ENCODE measurements at regions of chr11 and their contacts with region 1.

Region 1: GRCh38 chr11:133947321-133947756 is 9.4 kb downstream of the IGSF9B start:
- DNase-seq: peak; percentile 83
- ATAC-seq: peak; percentile 43
- H3K4me3 Mint-ChIP-seq: peak overlapping the region; percentile 81
- H3K27ac Mint-ChIP-seq: peak overlapping the region; percentile 75
- H3K4me1 Mint-ChIP-seq: peaks cover 65% of the 10 kb centered on the region
- H3K27me3 Mint-ChIP-seq: no peaks in the 10 kb centered on the region
- CTCF ChIP-seq: peak; percentile 39

Region 2: GRCh38 chr11:133762538-133762937 is 184.8 kb before region 1 on chr11:
- CTCF ChIA-PET with region 1: no interaction called
- POLR2A ChIA-PET with region 1: no interaction called
- intact Hi-C with region 1: no loop called
- DNase-seq: no peak
- ATAC-seq: no peak
- H3K4me3 Mint-ChIP-seq: no peak overlapping the region
- H3K27ac Mint-ChIP-seq: no peak overlapping the region
- H3K4me1 Mint-ChIP-seq: no peaks in the 10 kb centered on the region
- H3K27me3 Mint-ChIP-seq: peaks cover 6% of the 10 kb centered on the region
- CTCF ChIP-seq: no peak

Region 3: DNA sequence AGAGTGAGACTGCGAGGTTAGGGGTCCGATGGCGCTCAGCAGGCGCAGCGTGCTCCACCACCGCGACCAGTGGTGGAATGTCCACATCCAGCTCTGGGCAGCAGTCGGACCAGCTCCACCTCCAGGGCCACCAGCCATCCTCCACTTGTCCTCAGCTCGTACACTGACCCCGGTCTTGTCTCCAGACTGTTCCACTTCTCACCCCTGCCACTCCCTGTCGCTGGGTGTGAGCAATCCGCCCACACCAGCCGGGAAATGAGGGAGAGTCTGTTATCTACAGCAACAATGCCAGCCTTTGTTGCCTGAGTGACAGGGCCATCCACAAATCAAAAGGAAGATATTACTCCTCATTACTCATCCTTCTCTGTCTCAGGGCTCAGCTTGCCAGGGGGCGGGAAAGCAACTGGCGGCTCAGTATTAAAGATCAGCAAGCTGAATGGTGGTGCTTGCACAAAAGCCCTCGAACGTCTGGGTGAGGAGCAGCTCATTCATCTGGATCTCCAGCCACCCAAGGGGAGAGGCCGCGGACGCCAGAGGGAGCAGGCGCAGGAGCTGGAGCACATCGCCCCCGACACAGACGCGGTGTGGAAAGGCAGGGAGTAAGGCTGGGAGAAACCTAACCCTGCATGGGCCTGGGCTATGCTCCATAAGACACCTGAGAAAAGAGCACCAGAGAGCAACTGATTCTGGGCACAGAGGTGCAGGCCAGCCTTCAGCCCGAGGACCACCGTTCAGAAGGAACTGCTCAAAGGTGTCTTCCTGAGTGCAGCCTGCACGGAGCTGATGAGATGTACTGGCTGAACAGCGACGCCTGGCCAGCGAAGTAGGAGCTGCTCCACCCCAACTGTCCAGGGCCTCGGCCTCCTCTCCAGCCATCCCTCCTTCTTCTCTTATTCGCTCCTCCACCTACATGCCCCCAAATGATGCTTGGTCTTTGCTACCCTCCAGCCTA is 12.5 kb before region 1 on chr11:
- CTCF ChIA-PET with region 1: interaction called, 6 read pairs
- POLR2A ChIA-PET with region 1: interaction called, 11 read pairs
- intact Hi-C with region 1: no loop called
- DNase-seq: peak; percentile 35
- ATAC-seq: peak; percentile 64
- H3K4me3 Mint-ChIP-seq: no peak overlapping the region
- H3K27ac Mint-ChIP-seq: no peak overlapping the region
- H3K4me1 Mint-ChIP-seq: peaks cover 8% of the 10 kb centered on the region
- H3K27me3 Mint-ChIP-seq: no peaks in the 10 kb centered on the region
- CTCF ChIP-seq: no peak

Region 4: DNA sequence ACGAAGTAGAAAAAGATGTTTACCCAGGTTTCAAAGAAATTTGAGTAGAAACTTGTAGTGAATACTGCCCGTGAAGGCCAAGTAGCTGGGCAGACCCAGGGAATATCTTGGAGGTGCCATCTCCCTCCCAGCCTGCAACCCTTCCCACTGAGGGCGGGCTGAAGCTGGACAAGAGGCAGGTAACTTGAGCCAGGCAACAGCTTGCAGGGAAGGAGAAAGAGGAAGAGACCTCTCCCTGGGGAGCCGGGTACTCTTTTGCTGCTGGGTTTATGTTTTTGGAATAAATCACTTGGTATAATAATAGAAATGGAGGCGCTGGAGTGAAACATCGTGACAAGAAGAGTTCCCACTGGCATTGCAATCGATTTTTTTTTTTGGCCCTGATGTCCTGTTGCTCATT is 72.2 kb after region 1 on chr11:
- CTCF ChIA-PET with region 1: no interaction called
- POLR2A ChIA-PET with region 1: no interaction called
- intact Hi-C with region 1: no loop called
- DNase-seq: no peak
- ATAC-seq: no peak
- H3K4me3 Mint-ChIP-seq: no peak overlapping the region
- H3K27ac Mint-ChIP-seq: no peak overlapping the region
- H3K4me1 Mint-ChIP-seq: peaks cover 3% of the 10 kb centered on the region
- H3K27me3 Mint-ChIP-seq: peaks cover 4% of the 10 kb centered on the region
- CTCF ChIP-seq: no peak

Region 5: DNA sequence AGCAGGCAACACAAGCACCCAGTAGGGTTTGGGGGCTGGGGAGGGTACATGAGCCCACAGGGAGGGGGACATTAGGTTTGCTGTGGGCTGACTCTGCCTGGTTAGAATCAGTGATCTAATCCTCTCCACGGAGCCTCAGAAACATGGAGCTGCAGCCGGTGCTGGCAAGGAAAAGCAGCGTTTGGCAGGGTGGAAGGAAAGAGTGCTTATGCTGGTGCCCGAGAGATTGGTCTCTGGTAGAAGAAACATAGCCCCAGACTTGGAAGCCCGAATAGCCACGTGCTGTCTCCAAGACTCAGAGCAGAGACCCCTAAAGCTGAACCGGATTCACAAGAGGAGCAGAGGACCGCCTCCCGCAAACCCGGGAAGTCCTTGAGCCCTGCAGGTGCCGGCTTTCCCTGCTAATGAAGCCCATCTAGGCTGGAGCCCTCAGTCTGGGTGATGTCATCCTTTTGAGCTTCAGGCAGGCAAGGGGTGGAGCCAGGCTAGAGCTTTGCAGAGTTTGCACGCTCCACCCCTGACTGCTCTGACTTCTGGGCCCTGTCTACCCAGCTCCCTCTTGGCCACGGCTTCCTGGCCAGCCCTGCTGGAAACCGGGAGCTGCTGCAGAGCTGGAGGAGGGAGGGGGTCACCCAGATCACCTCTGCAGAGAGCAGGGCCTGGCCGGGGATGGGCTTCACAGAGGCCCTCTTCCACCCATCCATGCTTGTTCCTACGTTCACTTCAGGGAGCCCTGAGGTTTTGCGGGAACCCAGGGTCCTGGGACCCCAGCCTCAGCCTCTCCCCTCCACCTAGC is 86.6 kb after region 1 on chr11:
- CTCF ChIA-PET with region 1: interaction called, 8 read pairs
- POLR2A ChIA-PET with region 1: interaction called, 5 read pairs
- intact Hi-C with region 1: loop called (anchors 5 kb)
- DNase-seq: peak; percentile 87
- ATAC-seq: peak; percentile 90
- H3K4me3 Mint-ChIP-seq: peak overlapping the region; percentile 50
- H3K27ac Mint-ChIP-seq: peak overlapping the region; percentile 69
- H3K4me1 Mint-ChIP-seq: peaks cover 60% of the 10 kb centered on the region
- H3K27me3 Mint-ChIP-seq: no peaks in the 10 kb centered on the region
- CTCF ChIP-seq: no peak

Region 6: GRCh38 chr11:134139873-134140331 is 192.6 kb after region 1 on chr11:
- CTCF ChIA-PET with region 1: no interaction called
- POLR2A ChIA-PET with region 1: no interaction called
- intact Hi-C with region 1: loop called (anchors 5 kb)
- DNase-seq: peak; percentile 73
- ATAC-seq: peak; percentile 93
- H3K4me3 Mint-ChIP-seq: no peak overlapping the region
- H3K27ac Mint-ChIP-seq: no peak overlapping the region
- H3K4me1 Mint-ChIP-seq: peaks cover 18% of the 10 kb centered on the region
- H3K27me3 Mint-ChIP-seq: no peaks in the 10 kb centered on the region
- CTCF ChIP-seq: peak; percentile 80

Measured in activated CD8-positive, alpha-beta T cell treated with anti-CD3 and anti-CD28 coated beads for 36 hours (primary cell).